ENCODE measurements at regions of chr12 and their contacts with region 1.

Region 1: GRCh38 chr12:111812881-111813741 is 28.9 kb upstream of the MAPKAPK5 start:
- DNase-seq: peak; percentile 32 to 85 (median 48)
- ATAC-seq: peak; percentile 100
- H3K4me3 ChIP-seq: no peak overlapping the region
- H3K4me3 Mint-ChIP-seq: no peak overlapping the region
- H3K27ac ChIP-seq: no peak overlapping the region
- H3K27ac Mint-ChIP-seq: no peak overlapping the region
- H3K4me1 ChIP-seq: peaks cover 6% of the 10 kb centered on the region
- H3K4me1 Mint-ChIP-seq: peaks cover 6% of the 10 kb centered on the region
- H3K27me3 ChIP-seq: no peaks in the 10 kb centered on the region
- H3K27me3 Mint-ChIP-seq: no peaks in the 10 kb centered on the region
- CTCF ChIP-seq: peak; percentile 90

Region 2: DNA sequence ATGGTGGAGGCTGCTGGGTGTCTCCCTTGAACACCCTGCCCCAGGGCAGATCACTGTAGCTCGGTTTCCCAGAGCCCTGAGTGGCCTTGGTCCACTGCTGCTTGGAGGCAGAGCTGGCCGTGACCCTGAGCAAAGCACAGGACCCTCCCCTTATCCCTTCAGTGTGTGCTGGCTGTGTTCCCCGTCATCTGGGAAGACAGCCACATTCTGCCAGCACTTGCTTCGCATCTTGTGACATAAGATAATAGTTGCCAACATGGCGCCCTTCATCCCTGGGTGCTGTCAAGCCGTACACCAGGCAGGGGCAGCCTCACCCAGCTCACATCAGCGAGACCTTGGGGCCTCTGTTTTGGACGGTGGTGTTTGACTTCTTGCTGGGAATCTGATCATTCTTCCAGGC is 58.4 kb before region 1 on chr12:
- CTCF ChIA-PET with region 1: no interaction called
- POLR2A ChIA-PET with region 1: no interaction called
- intact Hi-C with region 1: loop called in 1 of 2 experiments (anchors 2 kb)
- DNase-seq: no peak
- ATAC-seq: no peak
- H3K4me3 ChIP-seq: no peak overlapping the region
- H3K4me3 Mint-ChIP-seq: no peak overlapping the region
- H3K27ac ChIP-seq: no peak overlapping the region
- H3K27ac Mint-ChIP-seq: no peak overlapping the region
- H3K4me1 ChIP-seq: peaks cover 8% of the 10 kb centered on the region
- H3K4me1 Mint-ChIP-seq: peaks cover 6% of the 10 kb centered on the region
- H3K27me3 ChIP-seq: no peaks in the 10 kb centered on the region
- H3K27me3 Mint-ChIP-seq: no peaks in the 10 kb centered on the region
- CTCF ChIP-seq: no peak

Region 3: DNA sequence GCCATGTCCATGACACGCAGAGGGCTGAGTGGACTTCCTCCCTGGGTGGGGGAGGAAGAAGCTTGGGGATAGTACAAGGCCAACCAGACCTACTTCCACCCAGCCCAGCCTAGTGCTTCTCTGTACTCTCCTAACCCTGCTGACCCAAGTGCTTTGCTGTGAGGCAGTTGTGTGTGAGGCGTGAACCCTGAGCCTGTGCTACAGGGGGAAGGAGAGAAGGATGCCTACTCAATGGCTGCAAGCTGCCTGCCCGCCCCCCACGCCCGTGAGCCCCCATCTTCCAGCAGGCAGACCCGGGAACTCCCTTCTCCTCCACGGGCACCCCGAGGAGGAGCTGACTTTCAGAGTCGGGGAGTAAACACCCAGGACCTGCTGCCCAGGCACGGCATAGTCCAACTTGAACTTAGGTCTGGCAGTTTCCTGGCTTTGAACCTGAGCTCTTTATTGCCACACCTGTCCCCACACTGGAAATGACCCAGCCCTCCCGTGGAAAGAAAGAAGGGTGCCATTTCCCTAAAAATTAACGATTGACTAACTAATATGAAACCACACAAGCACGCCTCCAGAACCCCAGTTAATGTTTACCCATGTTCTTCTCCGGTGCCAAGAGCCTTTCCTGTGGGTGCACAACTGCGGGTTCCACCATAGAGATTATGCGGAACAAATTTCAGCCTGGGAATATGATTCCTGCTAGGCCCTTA is 35.6 kb before region 1 on chr12:
- CTCF ChIA-PET with region 1: no interaction called
- POLR2A ChIA-PET with region 1: no interaction called
- intact Hi-C with region 1: no loop called
- DNase-seq: peak in 2 of 14 experiments; percentile 43 to 51
- ATAC-seq: no peak
- H3K4me3 ChIP-seq: no peak overlapping the region
- H3K4me3 Mint-ChIP-seq: no peak overlapping the region
- H3K27ac ChIP-seq: no peak overlapping the region
- H3K27ac Mint-ChIP-seq: no peak overlapping the region
- H3K4me1 ChIP-seq: peaks cover 10% of the 10 kb centered on the region
- H3K4me1 Mint-ChIP-seq: no peaks in the 10 kb centered on the region
- H3K27me3 ChIP-seq: peaks cover 0 to 3% of the 10 kb centered on the region in 2 experiments
- H3K27me3 Mint-ChIP-seq: no peaks in the 10 kb centered on the region
- CTCF ChIP-seq: no peak

Region 4: DNA sequence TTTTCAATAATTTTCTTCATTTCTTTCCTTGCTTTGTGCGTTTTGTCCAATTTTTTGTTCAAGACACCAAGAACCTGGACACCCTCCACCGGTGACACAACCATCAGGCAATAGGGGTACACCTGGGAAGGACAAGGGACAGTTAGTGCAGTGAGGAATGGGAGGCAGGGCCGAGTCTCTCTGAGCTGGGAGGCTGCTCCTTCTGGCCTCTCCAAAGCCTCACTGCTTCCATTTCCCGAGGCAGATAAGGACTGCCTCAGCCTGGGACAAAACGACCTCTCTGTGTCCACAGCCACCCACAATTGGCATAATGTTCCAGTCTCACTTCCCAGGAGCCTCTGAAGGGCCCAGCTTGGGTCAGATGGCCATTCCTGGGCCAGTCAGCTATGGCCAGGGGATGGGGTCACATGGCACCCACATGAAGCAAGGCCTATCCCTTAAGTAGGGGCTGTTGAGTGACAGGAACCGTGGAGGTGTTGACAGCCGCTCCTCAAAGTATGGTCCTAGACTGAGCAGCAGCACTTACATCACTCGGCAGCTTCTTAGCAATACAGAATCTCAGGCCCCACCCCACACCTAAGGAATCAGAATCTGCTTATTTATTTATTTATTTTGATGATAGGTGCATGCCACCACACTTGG is 15.3 kb after region 1 on chr12:
- CTCF ChIA-PET with region 1: no interaction called
- POLR2A ChIA-PET with region 1: no interaction called
- intact Hi-C with region 1: no loop called
- DNase-seq: no peak
- ATAC-seq: no peak
- H3K4me3 ChIP-seq: no peak overlapping the region
- H3K4me3 Mint-ChIP-seq: no peak overlapping the region
- H3K27ac ChIP-seq: no peak overlapping the region
- H3K27ac Mint-ChIP-seq: no peak overlapping the region
- H3K4me1 ChIP-seq: no peaks in the 10 kb centered on the region
- H3K4me1 Mint-ChIP-seq: no peaks in the 10 kb centered on the region
- H3K27me3 ChIP-seq: no peaks in the 10 kb centered on the region
- H3K27me3 Mint-ChIP-seq: peaks cover 8% of the 10 kb centered on the region
- CTCF ChIP-seq: no peak

Region 5: GRCh38 chr12:111868676-111869588 is 55.8 kb after region 1 on chr12:
- CTCF ChIA-PET with region 1: no interaction called
- POLR2A ChIA-PET with region 1: no interaction called
- intact Hi-C with region 1: no loop called
- DNase-seq: no peak
- ATAC-seq: no peak
- H3K4me3 ChIP-seq: no peak overlapping the region
- H3K4me3 Mint-ChIP-seq: no peak overlapping the region
- H3K27ac ChIP-seq: no peak overlapping the region
- H3K27ac Mint-ChIP-seq: no peak overlapping the region
- H3K4me1 ChIP-seq: no peaks in the 10 kb centered on the region
- H3K4me1 Mint-ChIP-seq: no peaks in the 10 kb centered on the region
- H3K27me3 ChIP-seq: no peaks in the 10 kb centered on the region
- H3K27me3 Mint-ChIP-seq: no peaks in the 10 kb centered on the region
- CTCF ChIP-seq: no peak

Measured in CD4-positive, alpha-beta T cell (primary cell).